A549 (cell line): ENCODE measurements at regions of chr11 and their contacts with region 1.

Region 1: GRCh38 chr11:34357701-34358257 is at the start of gene ABTB2:
- DNase-seq: peak; percentile 96 to 97
- ATAC-seq: peak; percentile 78 to 88
- H3K4me3 ChIP-seq: peak within 1 kb of the TSS; percentile 79
- H3K27ac ChIP-seq: peak within 1 kb of the TSS; percentile 79 to 91
- H3K4me1 ChIP-seq: peaks cover 32% of the 10 kb centered on the region
- CTCF ChIP-seq: no peak
- EP300 ChIP-seq: no peak
- POLR2A ChIP-seq: peak; percentile 99
- RAD21 ChIP-seq: peak in 1 of 2 experiments; percentile 17; a peak in 4 of 5 replicates
- polyA plus RNA-seq, gene ABTB2: 8.9 and 10.3 TPM in 2 replicates

Region 2: DNA sequence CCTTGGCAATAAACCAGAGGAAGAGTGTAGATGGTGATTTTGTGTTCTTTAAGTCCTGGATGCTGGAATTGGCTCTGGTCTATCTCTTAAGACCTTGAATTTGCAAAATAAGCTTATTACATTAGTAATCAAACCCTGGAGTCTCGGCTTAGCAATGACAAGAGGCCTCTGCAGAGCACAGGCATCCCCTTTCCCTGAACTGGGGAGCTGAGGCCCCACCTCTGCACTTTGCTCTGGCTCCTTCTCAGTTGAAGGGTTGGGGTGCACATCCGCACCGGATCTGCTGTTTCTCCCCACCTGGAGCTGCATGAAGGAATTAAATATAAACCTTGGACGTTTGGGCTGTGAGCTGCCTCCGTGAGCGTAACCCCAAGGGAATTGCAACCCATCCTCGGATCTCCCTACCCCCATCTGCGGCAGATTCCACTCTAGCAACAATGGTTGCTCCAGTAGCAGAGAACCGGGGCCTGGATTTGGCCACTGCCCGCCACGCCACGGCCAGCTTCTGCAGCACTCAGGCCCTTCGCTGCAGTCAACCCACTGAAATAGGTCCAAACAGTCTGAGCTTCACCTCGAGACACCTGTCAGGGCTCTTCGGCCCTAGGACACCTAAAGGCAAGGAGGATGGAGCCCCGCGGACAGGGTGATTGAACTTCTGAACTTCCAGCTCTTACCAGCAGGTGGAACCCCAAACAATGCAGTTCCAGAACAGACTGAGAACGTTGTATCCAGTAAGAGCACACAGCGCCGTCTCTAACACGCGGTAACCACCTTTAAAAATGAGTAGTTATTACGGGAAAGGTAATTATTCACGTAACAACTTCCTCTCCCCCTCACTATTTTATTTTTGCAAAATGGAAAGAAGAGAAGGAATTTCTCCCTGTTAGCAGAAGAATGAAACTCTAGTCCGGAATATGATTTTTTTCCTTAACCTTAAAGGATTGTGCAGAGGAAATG is 361.0 kb before region 1 on chr11:
- CTCF ChIA-PET with region 1: interaction called, 14 read pairs
- POLR2A ChIA-PET with region 1: no interaction called
- DNase-seq: peak; percentile 64 to 79
- ATAC-seq: peak; percentile 99 to 100
- H3K4me3 ChIP-seq: peak overlapping the region; percentile 23; the same call in 2 of the 3 replicates
- H3K27ac ChIP-seq: no peak overlapping the region
- H3K4me1 ChIP-seq: peaks cover 14% of the 10 kb centered on the region
- CTCF ChIP-seq: peak; percentile 87
- EP300 ChIP-seq: no peak
- POLR2A ChIP-seq: no peak
- RAD21 ChIP-seq: peak; percentile 82

Region 3: GRCh38 chr11:34168642-34169420 is 188.9 kb before region 1 on chr11:
- CTCF ChIA-PET with region 1: interaction called, 170 read pairs
- POLR2A ChIA-PET with region 1: interaction called, 40 read pairs
- DNase-seq: no peak
- ATAC-seq: no peak
- H3K4me3 ChIP-seq: no peak overlapping the region
- H3K27ac ChIP-seq: no peak overlapping the region
- H3K4me1 ChIP-seq: peaks cover 2% of the 10 kb centered on the region
- CTCF ChIP-seq: no peak
- EP300 ChIP-seq: no peak
- POLR2A ChIP-seq: no peak
- RAD21 ChIP-seq: no peak

Region 4: GRCh38 chr11:34192481-34193401 is 165.0 kb before region 1 on chr11:
- CTCF ChIA-PET with region 1: interaction called, 16 read pairs
- POLR2A ChIA-PET with region 1: interaction called, 10 read pairs
- DNase-seq: peak; percentile 52 to 78
- ATAC-seq: peak; percentile 88
- H3K4me3 ChIP-seq: no peak overlapping the region
- H3K27ac ChIP-seq: peak overlapping the region; percentile 23 to 76; a peak in 3 of 6 replicates
- H3K4me1 ChIP-seq: peaks cover 28% of the 10 kb centered on the region
- CTCF ChIP-seq: no peak
- EP300 ChIP-seq: no peak
- POLR2A ChIP-seq: no peak
- RAD21 ChIP-seq: no peak

Region 5: GRCh38 chr11:34250732-34251639 is 106.8 kb before region 1 on chr11:
- CTCF ChIA-PET with region 1: interaction called, 12 read pairs
- POLR2A ChIA-PET with region 1: interaction called, 6 read pairs
- DNase-seq: peak; percentile 69 to 71
- ATAC-seq: peak; percentile 86 to 87
- H3K4me3 ChIP-seq: no peak overlapping the region
- H3K27ac ChIP-seq: peak overlapping the region in 1 of 2 experiments; percentile 39; a peak in 3 of 6 replicates
- H3K4me1 ChIP-seq: peaks cover 63% of the 10 kb centered on the region
- CTCF ChIP-seq: no peak
- EP300 ChIP-seq: no peak
- POLR2A ChIP-seq: no peak
- RAD21 ChIP-seq: no peak; a peak in 1 of 5 replicates

Region 6: DNA sequence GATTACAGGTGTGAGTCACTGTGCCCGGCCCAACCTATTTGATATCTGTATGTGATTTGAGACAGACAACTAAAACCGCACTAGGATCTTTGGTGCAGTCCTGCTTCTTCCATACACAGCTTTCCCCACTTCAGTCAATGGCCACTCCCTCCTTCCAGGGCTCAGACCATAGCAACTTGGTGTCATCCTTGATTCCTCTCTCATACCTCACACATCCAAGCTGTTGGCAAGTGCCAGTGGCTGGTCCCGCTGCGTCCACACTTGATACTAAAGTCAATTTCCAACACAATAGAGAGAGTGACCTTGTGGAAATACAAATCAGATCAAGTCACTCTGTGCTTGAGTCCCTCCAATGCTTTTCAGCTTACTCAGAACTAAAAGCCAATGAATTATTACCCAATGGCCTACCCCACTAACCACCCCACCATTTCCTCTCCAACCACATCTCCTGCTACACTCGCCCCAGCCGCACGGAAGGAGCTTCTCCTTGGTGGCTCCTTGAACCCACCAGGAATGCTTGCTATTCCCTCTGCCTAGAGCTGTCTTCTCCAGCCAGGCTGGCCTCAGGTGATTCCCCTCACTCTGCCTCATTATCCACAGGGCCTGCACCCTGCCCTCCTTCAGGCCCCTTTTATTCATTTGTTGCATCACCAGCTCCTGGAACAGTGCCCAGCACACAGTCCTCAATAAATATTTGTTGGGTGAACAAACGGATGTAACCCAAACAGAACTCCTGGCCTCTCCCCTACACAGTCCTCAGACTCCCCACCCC is 12.8 kb before region 1 on chr11:
- CTCF ChIA-PET with region 1: interaction called, 55 read pairs
- POLR2A ChIA-PET with region 1: interaction called, 58 read pairs
- DNase-seq: peak; percentile 67 to 90
- ATAC-seq: peak; percentile 75
- H3K4me3 ChIP-seq: peak overlapping the region; percentile 9; the same call in 1 of the 3 replicates
- H3K27ac ChIP-seq: peak overlapping the region; percentile 88 to 89
- H3K4me1 ChIP-seq: peaks cover 100% of the 10 kb centered on the region
- CTCF ChIP-seq: no peak
- EP300 ChIP-seq: peak; percentile 71 to 83; a peak in 4 of 5 replicates
- POLR2A ChIP-seq: no peak
- RAD21 ChIP-seq: peak in 1 of 2 experiments; percentile 15; a peak in 3 of 5 replicates